Right ventricle myocardium superior (tissue), 1 donor: ENCODE measurements at regions of chr3 and their contacts with region 1.

Region 1: GRCh38 chr3:81666493-81667121 is 94.8 kb downstream of the GBE1 start:
- DNase-seq: no peak
- ATAC-seq: no peak

Region 2: GRCh38 chr3:82133070-82133606 is 466.5 kb after region 1 on chr3:
- intact Hi-C with region 1: loop called (anchors 10 kb)
- DNase-seq: peak; percentile 60
- ATAC-seq: peak; percentile 92